ENCODE measurements at regions of chr10 and their contacts with region 1.

Region 1: DNA sequence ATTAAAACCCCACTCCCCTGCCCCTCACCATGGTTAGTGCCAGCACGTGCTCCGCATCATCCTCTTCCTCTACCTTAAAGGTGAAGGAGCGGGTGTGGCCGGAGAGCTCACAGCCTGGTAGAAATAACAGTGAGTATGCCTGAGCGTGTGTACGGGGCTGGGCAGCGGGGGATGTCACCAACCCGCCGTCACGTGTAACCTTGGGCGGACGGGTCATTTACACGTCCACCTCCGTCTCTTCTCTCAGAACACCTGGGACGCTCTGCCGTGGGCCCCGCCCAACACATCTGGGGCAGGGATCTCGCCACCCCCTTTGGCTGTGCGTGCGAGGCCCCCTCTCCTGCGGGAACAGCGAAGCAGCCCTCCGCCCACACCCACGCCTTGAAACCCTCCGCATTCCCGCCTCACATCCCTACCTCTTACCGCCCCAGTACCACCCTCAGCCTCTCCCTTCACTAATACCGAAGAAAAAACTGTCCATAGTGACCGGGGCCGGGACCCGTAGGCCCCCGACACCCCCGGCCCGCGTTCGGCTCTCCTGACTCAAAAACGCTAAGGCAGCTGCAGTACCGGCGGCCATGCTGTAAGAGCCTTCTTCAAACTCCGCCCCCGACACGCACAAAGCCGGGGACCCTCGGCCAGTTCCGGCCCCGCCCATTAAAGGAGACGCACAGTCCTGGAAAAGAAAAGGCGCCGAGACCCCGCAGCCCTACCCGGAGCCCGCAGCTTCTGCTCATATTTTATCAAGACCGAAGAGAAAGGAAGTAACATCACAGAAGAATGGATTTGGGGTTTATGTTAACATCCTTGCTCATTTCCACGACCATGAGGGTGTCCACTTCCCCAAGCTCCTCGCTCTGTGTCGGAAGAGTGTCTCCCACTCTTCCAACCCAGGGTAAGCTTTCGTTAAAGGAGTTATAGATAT is at the start of gene NPM3:
- DNase-seq: peak; percentile 91
- H3K4me3 ChIP-seq: peak within 1 kb of the TSS; percentile 50 to 77 (median 64)
- H3K27ac ChIP-seq: peak within 1 kb of the TSS; percentile 54 to 65 (median 58)
- H3K4me1 ChIP-seq: peaks cover 0 to 60% (median 52%) of the 10 kb centered on the region in 4 donors
- H3K27me3 ChIP-seq: peaks cover 3 to 21% (median 9%) of the 10 kb centered on the region in 3 donors
- CTCF ChIP-seq: no peak
- EP300 ChIP-seq: no peak
- POLR2A ChIP-seq: no peak
- total RNA-seq, gene NPM3: 23.0 to 45.7 (median 29.8) TPM

Region 2: DNA sequence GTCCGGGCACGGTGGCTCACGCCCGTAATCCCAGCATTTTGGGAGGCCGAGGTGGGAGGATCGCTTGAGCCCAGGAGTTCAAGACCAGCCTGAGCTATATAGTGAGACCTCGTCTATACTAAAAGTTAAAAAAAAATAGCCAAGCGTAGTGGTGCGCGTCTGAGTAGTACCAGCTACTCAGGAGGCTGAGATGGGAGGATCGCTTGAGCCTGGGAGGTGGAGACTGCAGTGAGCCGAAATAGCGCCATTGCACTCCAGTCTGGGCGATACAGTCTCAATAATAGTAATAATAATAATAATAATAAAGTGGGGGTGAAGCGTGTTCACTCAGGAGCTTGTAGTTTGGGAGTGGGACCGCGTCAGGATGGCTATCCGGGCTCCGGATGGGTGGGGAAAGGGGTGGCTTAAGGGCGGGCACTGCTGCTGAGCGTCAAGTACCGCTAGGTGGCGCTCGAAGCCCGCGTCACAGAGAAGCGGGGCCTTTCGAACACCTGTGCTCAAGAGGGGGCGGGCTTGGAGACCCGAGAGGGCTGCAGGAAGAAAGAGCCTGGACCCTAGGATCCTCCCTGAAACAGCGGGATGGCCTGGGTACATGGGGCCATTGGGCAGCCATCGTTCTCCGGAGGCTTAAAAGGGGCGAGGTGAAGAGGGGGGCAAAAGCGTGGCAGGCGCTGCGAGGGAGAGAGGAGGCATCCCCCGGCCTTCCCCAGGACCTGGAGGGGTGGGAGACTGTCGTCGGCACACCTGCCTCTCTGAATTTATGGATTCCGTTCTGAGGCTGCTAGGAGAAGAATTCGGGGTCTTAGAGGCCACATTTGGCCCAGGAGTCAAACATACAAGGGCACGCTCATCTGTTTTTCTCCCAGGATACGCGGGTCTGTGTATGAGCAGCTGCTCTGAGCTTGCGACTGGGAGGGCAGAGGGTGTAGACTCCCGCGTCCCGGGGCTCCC is 568.4 kb before region 1 on chr10:
- intact Hi-C with region 1: loop called (anchors 10 kb)
- DNase-seq: no peak
- H3K4me3 ChIP-seq: no peak overlapping the region
- H3K27ac ChIP-seq: no peak overlapping the region
- H3K4me1 ChIP-seq: peaks cover 0 to 50% (median 45%) of the 10 kb centered on the region in 4 donors
- H3K27me3 ChIP-seq: peaks cover 55 to 99% (median 91%) of the 10 kb centered on the region in 3 donors
- CTCF ChIP-seq: peak; percentile 57 to 95 (median 73)
- EP300 ChIP-seq: no peak
- POLR2A ChIP-seq: no peak

Region 3: GRCh38 chr10:101587725-101588653 is 195.1 kb before region 1 on chr10 and contains the starts of genes DPCD and POLL:
- intact Hi-C with region 1: loop called (anchors 5 kb)
- DNase-seq: peak; percentile 99
- H3K4me3 ChIP-seq: peak within 1 kb of the TSS; percentile 84 to 96 (median 88)
- H3K27ac ChIP-seq: peak within 1 kb of the TSS; percentile 72 to 79 (median 76)
- H3K4me1 ChIP-seq: peaks cover 0 to 28% (median 20%) of the 10 kb centered on the region in 4 donors
- H3K27me3 ChIP-seq: no peaks in the 10 kb centered on the region
- CTCF ChIP-seq: no peak
- EP300 ChIP-seq: no peak
- POLR2A ChIP-seq: no peak
- total RNA-seq, gene DPCD: 18.5 to 80.2 (median 40.0) TPM
- total RNA-seq, gene POLL: 25.3 to 39.6 (median 33.2) TPM

Region 4: DNA sequence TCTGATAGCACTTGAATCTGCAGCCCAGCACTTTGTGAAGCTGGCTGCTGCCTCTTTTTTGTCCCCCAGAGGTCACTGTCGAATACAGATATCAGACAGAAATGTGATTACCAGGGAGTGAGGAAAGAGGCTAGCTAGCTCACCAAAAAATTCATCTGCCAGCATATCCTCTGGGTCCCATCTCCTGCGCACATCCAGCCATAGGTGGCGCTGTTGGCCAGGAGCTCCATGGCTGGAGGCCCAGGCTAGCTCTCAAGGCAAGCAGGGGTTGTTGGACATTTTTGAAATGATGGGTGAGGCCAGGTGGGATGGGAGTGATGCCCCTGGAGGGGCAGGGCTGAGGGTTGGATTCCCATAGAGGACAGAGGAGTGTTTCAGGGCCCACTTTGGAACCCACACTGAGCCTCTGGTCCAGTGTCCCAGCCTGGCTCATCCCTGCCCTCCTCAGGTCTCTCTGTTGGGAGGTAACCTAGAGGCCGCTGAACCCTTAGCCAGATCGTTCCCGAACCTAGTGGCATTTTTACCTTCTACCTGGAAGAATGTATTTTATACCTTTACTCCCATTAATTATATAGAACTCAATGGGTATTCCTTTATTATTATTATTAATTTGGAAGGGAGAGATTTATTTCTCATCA is 180.2 kb before region 1 on chr10:
- intact Hi-C with region 1: loop called (anchors 2 kb)
- DNase-seq: no peak
- H3K4me3 ChIP-seq: no peak overlapping the region
- H3K27ac ChIP-seq: no peak overlapping the region
- H3K4me1 ChIP-seq: no peaks in the 10 kb centered on the region
- H3K27me3 ChIP-seq: no peaks in the 10 kb centered on the region
- CTCF ChIP-seq: peak; percentile 37 to 67 (median 58)
- EP300 ChIP-seq: no peak
- POLR2A ChIP-seq: no peak

Region 5: GRCh38 chr10:101693978-101694673 is 88.9 kb before region 1 on chr10:
- intact Hi-C with region 1: loop called (anchors 5 kb)
- DNase-seq: peak; percentile 84
- H3K4me3 ChIP-seq: peak overlapping the region; percentile 81 to 90 (median 82)
- H3K27ac ChIP-seq: peak overlapping the region; percentile 95 to 99 (median 98)
- H3K4me1 ChIP-seq: peaks cover 0 to 47% (median 45%) of the 10 kb centered on the region in 4 donors
- H3K27me3 ChIP-seq: no peaks in the 10 kb centered on the region
- CTCF ChIP-seq: no peak
- EP300 ChIP-seq: no peak
- POLR2A ChIP-seq: no peak

Region 6: GRCh38 chr10:101818119-101818871 is 35.2 kb after region 1 on chr10 and contains the start of gene OGA:
- intact Hi-C with region 1: loop called (anchors 5 kb)
- DNase-seq: peak; percentile 100
- H3K4me3 ChIP-seq: peak within 1 kb of the TSS; percentile 89 to 100 (median 97)
- H3K27ac ChIP-seq: peak within 1 kb of the TSS; percentile 97 to 99 (median 98)
- H3K4me1 ChIP-seq: peaks cover 0 to 39% (median 35%) of the 10 kb centered on the region in 4 donors
- H3K27me3 ChIP-seq: no peaks in the 10 kb centered on the region
- CTCF ChIP-seq: no peak
- EP300 ChIP-seq: peak in 2 of 4 donors; percentile 13 to 29
- POLR2A ChIP-seq: peak; percentile 99 to 100
- total RNA-seq, gene OGA: 124 to 143 (median 140) TPM

Region 7: DNA sequence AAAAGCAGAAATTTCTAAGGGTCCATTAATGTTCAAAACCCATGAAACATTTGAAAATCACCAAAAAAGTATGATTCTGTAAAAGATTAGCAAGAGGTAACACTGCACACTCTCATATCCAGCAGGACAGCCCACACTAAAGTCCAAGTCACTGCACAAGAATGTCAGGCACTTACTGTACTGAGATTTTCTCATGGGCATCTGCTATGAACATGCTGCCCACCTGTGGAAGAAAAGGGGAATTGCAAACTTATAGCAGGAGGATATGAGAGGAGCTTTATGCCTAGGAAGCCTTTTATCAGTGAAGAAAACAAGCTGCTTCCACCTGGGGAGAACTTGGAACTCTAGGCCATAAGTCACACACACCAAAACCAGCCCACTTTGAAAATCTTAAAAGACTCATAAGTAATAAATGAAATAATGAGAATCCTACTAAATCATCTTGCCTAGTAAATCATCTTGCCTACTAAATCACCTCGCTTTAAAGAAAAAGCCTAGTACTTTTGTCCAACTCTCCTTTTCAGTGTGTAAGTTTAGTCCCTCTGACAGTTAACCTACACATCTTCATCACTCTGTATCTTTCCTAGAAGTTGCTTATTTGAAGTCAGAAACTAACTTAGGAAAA is 226.8 kb after region 1 on chr10:
- intact Hi-C with region 1: loop called (anchors 1 kb)
- DNase-seq: peak; percentile 65
- H3K4me3 ChIP-seq: no peak overlapping the region
- H3K27ac ChIP-seq: no peak overlapping the region
- H3K4me1 ChIP-seq: peaks cover 0 to 6% (median 0%) of the 10 kb centered on the region in 4 donors
- H3K27me3 ChIP-seq: no peaks in the 10 kb centered on the region
- CTCF ChIP-seq: peak; percentile 70 to 88 (median 82)
- EP300 ChIP-seq: no peak
- POLR2A ChIP-seq: no peak

Region 8: DNA sequence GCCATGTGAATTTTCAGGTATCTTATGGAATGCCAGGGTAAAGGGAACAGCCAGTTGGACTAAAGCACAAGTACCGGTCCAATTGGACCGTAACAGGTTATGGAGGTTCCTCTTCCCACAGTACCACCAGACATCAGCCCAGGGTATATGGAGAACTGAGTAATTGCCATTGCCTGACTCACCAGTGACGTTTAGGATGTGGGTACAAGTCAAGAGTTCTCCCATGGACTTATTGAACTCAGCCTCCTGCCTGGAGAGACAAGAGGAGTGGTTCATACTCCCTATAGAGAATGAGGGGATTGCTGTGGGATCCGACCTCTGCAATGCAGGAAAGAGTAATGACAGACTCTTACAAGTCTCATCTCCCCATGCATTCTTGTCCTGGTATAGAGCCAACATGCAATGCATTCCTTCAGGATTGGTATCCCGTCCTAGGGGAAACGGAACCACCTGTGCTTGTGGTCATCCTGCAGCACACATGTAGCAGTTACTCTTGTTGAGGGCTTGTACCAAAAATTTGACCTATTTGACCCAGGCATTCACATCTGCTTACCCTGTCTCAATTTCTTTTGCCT is 412.3 kb after region 1 on chr10:
- intact Hi-C with region 1: no loop called
- DNase-seq: no peak
- H3K4me3 ChIP-seq: no peak overlapping the region
- H3K27ac ChIP-seq: no peak overlapping the region
- H3K4me1 ChIP-seq: no peaks in the 10 kb centered on the region
- H3K27me3 ChIP-seq: no peaks in the 10 kb centered on the region
- CTCF ChIP-seq: no peak
- EP300 ChIP-seq: no peak
- POLR2A ChIP-seq: no peak

Measured in sigmoid colon (tissue), 7 donors.